ENCODE measurements at regions of chr16 and their contacts with region 1.

Region 1: DNA sequence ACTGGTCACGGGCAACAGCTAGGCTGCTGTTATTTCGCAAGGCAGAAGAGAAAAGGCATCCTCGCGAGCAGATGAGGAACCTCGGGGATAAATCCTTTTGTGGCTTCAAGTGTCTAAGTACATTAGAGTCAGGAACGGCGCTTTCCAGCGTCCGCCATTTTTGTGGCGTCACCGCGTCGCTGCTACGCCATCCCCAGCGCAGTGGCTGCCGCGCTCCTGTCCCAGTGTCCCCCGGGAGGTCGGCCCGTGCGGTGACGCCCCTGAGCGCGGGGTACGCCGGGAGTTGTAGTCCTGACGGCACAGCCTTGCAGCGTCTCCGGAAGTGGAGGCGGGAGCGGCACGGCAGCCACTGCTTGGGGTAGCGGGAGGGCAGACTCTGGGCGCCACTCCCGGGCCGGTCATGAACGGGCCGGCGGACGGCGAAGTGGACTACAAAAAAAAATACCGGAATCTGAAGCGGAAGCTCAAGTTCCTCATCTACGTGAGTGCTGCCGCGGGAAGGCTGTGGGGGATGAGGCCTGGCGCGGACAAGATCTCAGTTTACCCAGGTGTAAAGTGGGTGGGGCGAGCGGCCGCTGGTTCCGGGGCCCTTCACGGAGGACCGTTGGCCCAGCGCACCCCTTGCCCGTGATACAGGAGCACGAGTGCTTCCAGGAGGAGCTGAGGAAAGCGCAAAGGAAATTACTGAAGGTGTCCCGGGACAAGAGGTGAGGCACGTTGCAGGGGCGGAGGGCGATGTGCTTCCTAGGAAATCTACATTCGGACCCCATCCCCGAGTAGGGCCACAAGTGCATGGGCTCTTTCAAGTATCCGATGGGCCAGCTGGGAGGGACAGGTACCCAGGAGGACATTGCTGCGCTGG is at the start of gene INO80E:
- DNase-seq: peak; percentile 98
- ATAC-seq: peak; percentile 91 to 97
- H3K4me3 ChIP-seq: peak within 1 kb of the TSS; percentile 79 to 100 (median 90)
- H3K27ac ChIP-seq: peak within 1 kb of the TSS; percentile 95 to 100 (median 99)
- H3K4me1 ChIP-seq: peaks cover 17 to 21% of the 10 kb centered on the region in 2 donors
- H3K27me3 ChIP-seq: no peaks in the 10 kb centered on the region
- CTCF ChIP-seq: peak in 1 of 5 experiments; percentile 10
- POLR2A ChIP-seq: peak; percentile 64 to 71
- total RNA-seq, gene INO80E: 45.4 to 74.8 (median 55.5) TPM

Region 2: GRCh38 chr16:29815793-29816693 is 180.1 kb before region 1 on chr16 and contains the start of gene PAGR1:
- in situ Hi-C with region 1: no loop called
- intact Hi-C with region 1: loop called (anchors 5 kb)
- DNase-seq: peak; percentile 98 to 99
- ATAC-seq: peak; percentile 79 to 83
- H3K4me3 ChIP-seq: peak within 1 kb of the TSS; percentile 78 to 96 (median 90)
- H3K27ac ChIP-seq: peak within 1 kb of the TSS; percentile 91 to 99 (median 95)
- H3K4me1 ChIP-seq: peaks cover 44 to 53% of the 10 kb centered on the region in 2 donors
- H3K27me3 ChIP-seq: no peaks in the 10 kb centered on the region
- CTCF ChIP-seq: peak; percentile 95 to 97 (median 95)
- POLR2A ChIP-seq: peak; percentile 66 to 72
- total RNA-seq, gene PAGR1: 15.5 to 29.2 (median 21.7) TPM

Region 3: GRCh38 chr16:29940656-29941055 is 55.5 kb before region 1 on chr16:
- in situ Hi-C with region 1: no loop called
- intact Hi-C with region 1: no loop called
- DNase-seq: no peak
- ATAC-seq: no peak
- H3K4me3 ChIP-seq: no peak overlapping the region
- H3K27ac ChIP-seq: no peak overlapping the region
- H3K4me1 ChIP-seq: no peaks in the 10 kb centered on the region
- H3K27me3 ChIP-seq: no peaks in the 10 kb centered on the region
- CTCF ChIP-seq: no peak
- POLR2A ChIP-seq: no peak

Region 4: DNA sequence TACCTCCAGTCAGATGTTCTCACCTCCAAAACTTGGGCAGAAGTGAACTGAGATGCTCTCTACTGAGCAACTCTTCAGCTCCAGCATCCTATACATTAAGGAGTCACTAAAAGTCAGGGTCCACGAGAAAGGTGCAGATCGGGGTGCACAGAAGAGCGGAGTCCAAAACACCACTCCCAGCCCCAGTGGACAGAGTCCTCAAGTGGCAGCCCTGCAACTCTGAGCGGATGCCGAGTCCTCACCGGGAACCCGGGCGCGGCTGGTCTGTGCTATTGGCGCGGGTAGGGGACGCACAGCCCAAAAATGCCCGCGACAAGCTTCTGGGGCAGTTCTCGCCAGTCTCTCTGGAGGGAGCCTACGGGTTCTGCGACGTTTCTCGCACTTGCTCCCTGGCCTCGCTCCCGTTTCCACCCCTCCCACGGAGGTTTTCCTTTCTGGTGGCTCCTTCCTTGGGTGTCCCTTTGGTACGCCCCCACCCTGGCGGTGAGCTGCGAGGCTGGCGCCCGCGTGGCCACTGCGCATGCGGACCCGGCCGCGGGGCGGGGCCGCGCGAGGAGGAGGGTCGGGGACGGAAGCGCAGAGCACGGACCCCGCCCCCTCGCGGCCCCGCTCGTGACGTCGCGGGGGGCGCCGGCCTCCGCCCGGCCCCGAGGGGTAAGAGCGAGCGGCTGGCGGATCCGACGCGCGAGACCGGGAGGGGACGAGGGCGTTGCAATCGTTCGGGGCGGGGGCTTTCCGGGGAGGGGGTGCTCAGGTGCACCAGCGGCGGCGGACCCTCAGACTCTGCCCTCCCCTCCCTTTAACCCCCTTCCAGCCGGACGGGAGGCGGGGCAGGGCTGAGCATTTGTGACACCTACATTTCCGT is 34.4 kb before region 1 on chr16 and contains the start of gene TMEM219:
- in situ Hi-C with region 1: no loop called
- intact Hi-C with region 1: loop called (anchors 5 kb)
- DNase-seq: peak; percentile 62 to 81
- ATAC-seq: peak; percentile 95 to 96
- H3K4me3 ChIP-seq: peak within 1 kb of the TSS; percentile 67 to 95 (median 80)
- H3K27ac ChIP-seq: peak within 1 kb of the TSS; percentile 74 to 94 (median 88)
- H3K4me1 ChIP-seq: peaks cover 6 to 12% of the 10 kb centered on the region in 2 donors
- H3K27me3 ChIP-seq: no peaks in the 10 kb centered on the region
- CTCF ChIP-seq: peak; percentile 57 to 70 (median 67)
- POLR2A ChIP-seq: peak; percentile 53 to 55
- total RNA-seq, gene TMEM219: 48.1 to 120 (median 60.2) TPM

Region 5: DNA sequence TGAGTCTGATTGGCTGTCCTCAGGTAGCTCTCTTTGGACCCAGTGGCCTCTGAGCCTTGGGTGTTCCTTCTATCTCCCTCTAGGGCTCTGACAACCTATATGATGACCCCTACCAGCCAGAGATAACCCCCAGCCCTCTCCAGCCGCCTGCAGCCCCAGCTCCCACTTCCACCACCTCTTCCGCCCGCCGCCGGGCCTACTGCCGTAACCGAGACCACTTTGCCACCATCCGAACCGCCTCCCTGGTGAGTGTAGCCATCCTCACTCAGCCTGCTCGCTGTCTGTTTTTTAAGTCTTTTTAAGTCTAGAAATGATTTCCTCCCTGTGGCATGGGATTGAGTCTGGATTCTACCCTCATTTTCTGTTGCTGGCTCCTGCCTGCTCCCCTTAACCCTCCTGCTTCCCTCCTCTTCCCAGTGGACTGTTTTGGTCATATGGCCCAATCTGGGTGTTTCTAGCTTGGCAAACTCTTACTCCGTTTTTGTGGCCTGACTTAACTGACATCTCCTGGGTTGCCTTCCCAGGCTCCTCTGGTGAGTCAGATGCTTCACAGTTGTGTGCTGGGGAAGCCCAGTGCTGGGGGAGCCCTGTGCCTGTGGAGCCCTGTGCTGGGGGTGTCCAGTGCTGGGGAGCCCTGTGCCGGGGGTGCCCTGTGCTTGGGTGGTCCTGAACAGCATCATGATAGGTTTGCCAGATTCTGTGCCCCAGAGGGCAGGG is 12.6 kb before region 1 on chr16:
- in situ Hi-C with region 1: no loop called
- intact Hi-C with region 1: no loop called
- DNase-seq: no peak
- ATAC-seq: no peak
- H3K4me3 ChIP-seq: no peak overlapping the region
- H3K27ac ChIP-seq: no peak overlapping the region
- H3K4me1 ChIP-seq: peaks cover 0 to 3% of the 10 kb centered on the region in 2 donors
- H3K27me3 ChIP-seq: no peaks in the 10 kb centered on the region
- CTCF ChIP-seq: no peak
- POLR2A ChIP-seq: no peak

Region 6: DNA sequence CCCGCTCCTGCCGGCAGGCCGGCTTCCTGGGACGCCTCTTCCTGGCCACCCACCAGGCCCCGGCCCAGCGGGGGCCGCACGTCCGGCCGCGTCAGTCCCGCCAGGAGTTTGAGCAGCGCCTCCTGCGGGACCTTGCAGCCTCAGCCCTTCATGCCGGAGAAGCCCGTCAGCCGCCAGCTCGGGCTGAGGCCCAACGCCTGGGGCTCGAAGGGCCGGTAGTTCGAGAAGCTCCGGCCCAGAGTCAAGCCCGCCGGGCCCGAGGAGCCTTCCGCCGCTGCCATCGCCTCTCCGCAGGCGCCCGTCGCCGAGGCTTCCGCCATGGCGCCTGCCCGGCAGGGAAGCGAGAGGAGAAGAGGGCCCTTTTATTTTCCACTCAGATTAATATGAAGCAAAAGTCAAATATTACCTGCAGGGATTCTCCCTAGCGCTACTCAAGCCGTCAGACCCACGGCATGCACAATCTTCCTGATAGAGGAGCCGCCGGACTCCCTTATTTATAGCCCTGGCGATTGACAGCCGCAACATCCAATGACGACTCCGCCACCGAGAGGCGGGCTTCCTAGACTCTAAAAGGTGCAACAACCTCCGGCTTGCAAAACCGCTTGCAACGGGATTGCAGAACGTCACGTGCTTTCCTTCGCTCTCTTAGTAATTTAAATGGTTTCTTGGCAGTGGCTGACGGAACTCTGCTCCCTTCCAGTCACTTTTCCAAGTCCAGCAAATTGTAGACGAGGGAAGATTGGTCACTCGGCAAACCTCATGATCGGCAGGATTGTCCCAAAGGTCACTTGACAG is 449.5 kb after region 1 on chr16 and contains the start of gene SEPHS2:
- in situ Hi-C with region 1: no loop called
- intact Hi-C with region 1: no loop called
- DNase-seq: peak; percentile 96 to 100
- ATAC-seq: peak; percentile 98
- H3K4me3 ChIP-seq: peak within 1 kb of the TSS; percentile 89 to 100 (median 95)
- H3K27ac ChIP-seq: peak within 1 kb of the TSS; percentile 97 to 100 (median 98)
- H3K4me1 ChIP-seq: peaks cover 20 to 21% of the 10 kb centered on the region in 2 donors
- H3K27me3 ChIP-seq: no peaks in the 10 kb centered on the region
- CTCF ChIP-seq: peak in 4 of 5 experiments; percentile 26 to 64 (median 44)
- POLR2A ChIP-seq: peak; percentile 96
- total RNA-seq, gene SEPHS2: 23.7 to 29.5 (median 27.4) TPM

Region 7: GRCh38 chr16:30534368-30535105 is 538.4 kb after region 1 on chr16 and contains the start of gene ZNF747:
- in situ Hi-C with region 1: no loop called
- intact Hi-C with region 1: loop called (anchors 10 kb)
- DNase-seq: peak; percentile 93 to 95
- ATAC-seq: peak; percentile 87 to 91
- H3K4me3 ChIP-seq: peak within 1 kb of the TSS; percentile 65 to 88 (median 82)
- H3K27ac ChIP-seq: peak within 1 kb of the TSS; percentile 90 to 96 (median 94)
- H3K4me1 ChIP-seq: peaks cover 23 to 24% of the 10 kb centered on the region in 2 donors
- H3K27me3 ChIP-seq: no peaks in the 10 kb centered on the region
- CTCF ChIP-seq: peak in 1 of 5 experiments; percentile 6
- POLR2A ChIP-seq: peak; percentile 71 to 74
- total RNA-seq, gene ZNF747: 8.6 to 17.5 (median 13.1) TPM

Region 8: GRCh38 chr16:30602616-30603277 is 606.6 kb after region 1 on chr16:
- in situ Hi-C with region 1: no loop called
- intact Hi-C with region 1: no loop called
- DNase-seq: no peak
- ATAC-seq: no peak
- H3K4me3 ChIP-seq: no peak overlapping the region
- H3K27ac ChIP-seq: peak overlapping the region in 1 of 4 donors; percentile 9
- H3K4me1 ChIP-seq: no peaks in the 10 kb centered on the region
- H3K27me3 ChIP-seq: no peaks in the 10 kb centered on the region
- CTCF ChIP-seq: no peak
- POLR2A ChIP-seq: no peak

Measured in gastrocnemius medialis (tissue), 4 donors.